ENCODE measurements at regions of chr17 and their contacts with region 1.

Region 1: DNA sequence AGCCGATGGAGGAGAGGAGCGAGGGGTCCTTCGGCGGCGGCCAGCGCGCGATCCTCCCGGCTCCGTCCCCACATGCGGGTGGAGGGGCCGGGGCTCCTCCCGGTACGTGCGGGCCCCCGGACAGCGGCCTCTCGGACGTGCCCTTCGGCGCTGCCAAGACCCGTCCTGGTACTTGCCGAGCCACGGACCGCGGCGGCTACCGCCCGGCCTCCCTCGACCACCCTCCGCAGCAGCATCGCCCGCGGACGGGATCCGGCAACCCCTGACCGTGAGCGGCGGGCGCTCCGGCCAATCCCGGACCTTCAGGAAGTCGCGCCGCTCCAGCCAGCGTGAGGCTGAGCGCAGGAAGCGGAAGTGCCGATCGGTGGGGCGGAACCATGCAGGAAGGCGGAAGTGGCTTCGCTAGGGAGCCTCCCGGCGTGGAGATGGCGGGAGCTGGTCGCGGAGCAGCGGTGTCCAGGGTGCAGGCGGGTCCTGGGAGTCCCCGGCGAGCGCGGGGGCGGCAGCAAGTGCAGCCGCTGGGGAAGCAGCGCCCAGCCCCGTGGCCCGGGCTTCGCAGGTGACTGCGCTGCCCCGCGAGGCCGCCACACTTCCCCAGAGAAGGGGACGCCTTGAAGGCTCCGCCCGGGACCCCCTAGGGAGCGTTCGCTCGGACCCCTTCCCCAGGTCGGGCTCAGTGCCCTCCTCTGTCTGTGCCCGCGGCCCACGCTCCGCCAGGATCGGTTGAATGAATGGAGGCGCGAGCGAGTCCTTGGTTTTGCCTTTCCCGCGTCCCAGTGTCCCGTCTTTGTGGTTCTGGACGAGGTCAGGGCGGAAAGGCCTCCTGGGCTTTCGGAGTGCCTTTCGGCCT is at the starts of genes CCDC137 and OXLD1:
- DNase-seq: peak; percentile 97 to 98 (median 98)
- ATAC-seq: peak; percentile 97 to 100 (median 99)
- H3K4me3 ChIP-seq: peak within 1 kb of the TSS; percentile 77 to 100 (median 94)
- H3K27ac ChIP-seq: peak within 1 kb of the TSS; percentile 62 to 95 (median 88)
- H3K4me1 ChIP-seq: peaks cover 0 to 29% (median 16%) of the 10 kb centered on the region in 12 donors
- H3K27me3 ChIP-seq: no peaks in the 10 kb centered on the region
- CTCF ChIP-seq: no peak
- POLR2A ChIP-seq: peak; percentile 64 to 95
- total RNA-seq, gene CCDC137: 3.5 to 10.1 (median 6.3) TPM
- total RNA-seq, gene OXLD1: 16.9 to 28.8 (median 21.7) TPM

Region 2: DNA sequence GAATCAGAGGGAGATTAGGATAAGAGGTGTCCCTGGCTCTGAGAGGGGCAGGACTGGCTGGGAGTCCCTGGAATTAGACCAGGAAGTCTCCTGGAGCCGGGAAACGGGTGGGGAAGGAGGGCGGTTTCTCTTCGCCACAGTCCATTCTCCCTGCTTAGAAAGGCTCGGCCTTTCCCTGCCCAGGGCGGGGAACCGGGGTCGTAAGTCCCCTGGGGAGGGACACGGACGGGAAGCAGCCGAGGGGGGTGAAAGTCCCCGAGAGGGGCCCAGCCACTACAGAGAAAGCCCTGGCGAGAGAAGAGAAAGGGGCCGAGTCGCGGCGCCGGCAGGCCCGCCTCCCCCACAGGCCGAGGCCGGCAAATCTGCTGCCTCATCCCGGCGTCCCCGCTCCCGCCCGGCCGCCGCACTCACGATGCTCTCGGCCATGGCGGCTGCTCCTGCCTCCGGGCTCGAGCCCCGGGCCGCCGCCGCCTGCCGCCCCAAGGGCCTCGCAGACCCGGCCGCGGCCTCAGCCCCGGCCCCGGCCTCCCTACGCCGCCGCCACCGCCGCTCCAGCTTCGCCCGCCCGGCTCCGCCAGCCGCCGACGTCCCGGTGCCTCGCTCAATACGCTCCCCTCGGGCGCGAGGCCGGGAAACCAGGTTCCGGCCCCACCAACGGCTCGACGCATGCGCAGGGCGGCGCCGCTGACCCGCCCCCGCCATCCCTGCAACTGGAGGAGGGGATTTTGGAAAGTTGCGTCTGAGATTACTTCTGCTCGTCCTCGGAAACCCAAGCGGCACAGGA is 29.9 kb before region 1 on chr17 and contains the starts of genes NPLOC4 and TSPAN10:
- intact Hi-C with region 1: loop called in 3 of 10 experiments (anchors 2 kb)
- DNase-seq: peak; percentile 86 to 94 (median 89)
- ATAC-seq: peak; percentile 48 to 93 (median 88)
- H3K4me3 ChIP-seq: peak within 1 kb of the TSS; percentile 71 to 100 (median 92)
- H3K27ac ChIP-seq: peak within 1 kb of the TSS; percentile 73 to 97 (median 95)
- H3K4me1 ChIP-seq: peaks cover 10 to 48% (median 32%) of the 10 kb centered on the region in 12 donors
- H3K27me3 ChIP-seq: no peaks in the 10 kb centered on the region
- CTCF ChIP-seq: peak in 1 of 12 donors; percentile 8
- POLR2A ChIP-seq: peak; percentile 37 to 39
- total RNA-seq, gene NPLOC4: 92.1 to 133 (median 99.3) TPM
- total RNA-seq, gene TSPAN10: 0.21 to 0.41 (median 0.38) TPM in 4 of 9 donors, not detected in the others

Region 3: GRCh38 chr17:81683584-81684237 is 17.1 kb after region 1 on chr17 and contains the starts of genes ARL16 and HGS:
- intact Hi-C with region 1: loop called in 1 of 10 experiments (anchors 2 kb)
- DNase-seq: peak; percentile 97 to 99 (median 98)
- ATAC-seq: peak; percentile 99
- H3K4me3 ChIP-seq: peak within 1 kb of the TSS; percentile 85 to 100 (median 92)
- H3K27ac ChIP-seq: peak within 1 kb of the TSS; percentile 35 to 91 (median 85)
- H3K4me1 ChIP-seq: peaks cover 5 to 45% (median 26%) of the 10 kb centered on the region in 12 donors
- H3K27me3 ChIP-seq: no peaks in the 10 kb centered on the region
- CTCF ChIP-seq: no peak
- POLR2A ChIP-seq: peak in 1 of 2 donors; percentile 81
- total RNA-seq, gene ARL16: 10.2 to 22.3 (median 13.3) TPM
- total RNA-seq, gene HGS: 37.4 to 90.8 (median 40.3) TPM

Measured in heart left ventricle (tissue), 16 donors.